AG04450 (cell line): ENCODE measurements at regions of chrX and their contacts with region 1.

Region 1: DNA sequence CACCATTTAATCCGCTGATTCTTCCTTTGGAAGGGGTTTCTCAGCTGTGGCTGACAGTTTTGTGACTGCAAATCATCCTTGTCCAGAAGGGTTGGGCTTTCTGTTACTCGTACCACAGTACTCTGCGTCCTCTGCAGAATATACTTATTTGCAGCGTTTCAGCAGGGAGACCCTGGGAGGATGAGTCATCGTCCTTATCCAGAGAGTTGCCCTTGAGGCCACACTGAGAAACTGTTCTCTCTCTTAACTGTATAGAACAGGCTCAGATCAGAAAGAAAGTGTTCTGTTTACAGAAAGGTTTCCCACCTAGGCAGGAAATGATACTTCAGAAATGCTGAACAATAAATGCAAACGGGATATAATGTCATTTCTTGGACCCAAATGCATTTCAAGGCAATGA is 47.8 kb upstream of the DDX53 start:
- DNase-seq: no peak
- H3K4me3 ChIP-seq: no peak overlapping the region
- H3K27ac ChIP-seq: no peak overlapping the region
- H3K27me3 ChIP-seq: no peaks in the 10 kb centered on the region
- CTCF ChIP-seq: no peak

Region 2: GRCh38 chrX:22686138-22686541 is 265.9 kb before region 1 on chrX:
- CTCF ChIA-PET with region 1: no interaction called
- POLR2A ChIA-PET with region 1: no interaction called
- DNase-seq: peak; percentile 24
- H3K4me3 ChIP-seq: no peak overlapping the region
- H3K27ac ChIP-seq: no peak overlapping the region
- H3K27me3 ChIP-seq: no peaks in the 10 kb centered on the region
- CTCF ChIP-seq: no peak

Region 3: DNA sequence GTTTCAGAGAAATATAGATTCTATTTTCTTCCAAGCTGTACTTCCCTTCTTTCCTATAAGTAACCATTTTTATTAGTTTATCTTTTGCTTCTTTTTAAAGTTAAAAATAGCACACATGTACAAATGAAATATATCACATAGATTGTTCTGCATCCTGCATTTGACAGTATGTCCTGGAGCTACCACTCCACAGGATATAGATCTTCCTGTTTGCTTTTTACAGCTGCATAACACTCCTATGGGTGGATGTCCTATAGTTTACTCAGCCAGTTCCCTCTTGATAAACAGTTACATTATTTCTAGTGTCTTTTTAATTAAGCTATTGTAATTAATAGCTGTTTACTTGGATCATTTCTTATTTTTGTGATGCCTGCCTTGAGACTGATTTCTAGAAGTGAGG is 253.9 kb before region 1 on chrX:
- CTCF ChIA-PET with region 1: no interaction called
- POLR2A ChIA-PET with region 1: interaction called, 10 read pairs
- DNase-seq: no peak
- H3K4me3 ChIP-seq: no peak overlapping the region
- H3K27ac ChIP-seq: no peak overlapping the region
- H3K27me3 ChIP-seq: no peaks in the 10 kb centered on the region
- CTCF ChIP-seq: no peak

Region 4: GRCh38 chrX:22795716-22796115 is 156.3 kb before region 1 on chrX:
- CTCF ChIA-PET with region 1: no interaction called
- POLR2A ChIA-PET with region 1: no interaction called
- DNase-seq: no peak
- H3K4me3 ChIP-seq: no peak overlapping the region
- H3K27ac ChIP-seq: no peak overlapping the region
- H3K27me3 ChIP-seq: no peaks in the 10 kb centered on the region
- CTCF ChIP-seq: no peak

Region 5: DNA sequence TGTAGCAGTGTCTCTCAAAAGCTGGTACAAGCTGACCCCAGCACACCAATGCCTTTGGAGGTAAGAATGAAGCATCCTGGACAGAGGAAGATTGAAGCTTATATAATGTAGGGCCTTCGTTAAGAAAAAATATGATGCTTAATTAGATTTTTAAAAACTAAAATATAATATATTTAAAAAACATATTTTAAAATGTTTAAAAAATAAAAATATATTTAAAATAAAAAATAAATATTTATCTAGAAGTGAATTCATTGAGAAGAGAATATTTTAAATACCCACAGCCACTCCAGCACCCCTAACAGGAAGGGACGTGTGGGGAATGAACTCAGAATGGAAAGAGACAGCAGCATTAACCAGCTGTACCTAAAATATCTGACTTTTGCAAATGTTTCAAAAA is 17.4 kb before region 1 on chrX:
- CTCF ChIA-PET with region 1: no interaction called
- POLR2A ChIA-PET with region 1: no interaction called
- DNase-seq: no peak
- H3K4me3 ChIP-seq: no peak overlapping the region
- H3K27ac ChIP-seq: no peak overlapping the region
- H3K27me3 ChIP-seq: no peaks in the 10 kb centered on the region
- CTCF ChIP-seq: no peak